IMR-90 (cell line): ENCODE measurements at regions of chr12 and their contacts with region 1.

Region 1: DNA sequence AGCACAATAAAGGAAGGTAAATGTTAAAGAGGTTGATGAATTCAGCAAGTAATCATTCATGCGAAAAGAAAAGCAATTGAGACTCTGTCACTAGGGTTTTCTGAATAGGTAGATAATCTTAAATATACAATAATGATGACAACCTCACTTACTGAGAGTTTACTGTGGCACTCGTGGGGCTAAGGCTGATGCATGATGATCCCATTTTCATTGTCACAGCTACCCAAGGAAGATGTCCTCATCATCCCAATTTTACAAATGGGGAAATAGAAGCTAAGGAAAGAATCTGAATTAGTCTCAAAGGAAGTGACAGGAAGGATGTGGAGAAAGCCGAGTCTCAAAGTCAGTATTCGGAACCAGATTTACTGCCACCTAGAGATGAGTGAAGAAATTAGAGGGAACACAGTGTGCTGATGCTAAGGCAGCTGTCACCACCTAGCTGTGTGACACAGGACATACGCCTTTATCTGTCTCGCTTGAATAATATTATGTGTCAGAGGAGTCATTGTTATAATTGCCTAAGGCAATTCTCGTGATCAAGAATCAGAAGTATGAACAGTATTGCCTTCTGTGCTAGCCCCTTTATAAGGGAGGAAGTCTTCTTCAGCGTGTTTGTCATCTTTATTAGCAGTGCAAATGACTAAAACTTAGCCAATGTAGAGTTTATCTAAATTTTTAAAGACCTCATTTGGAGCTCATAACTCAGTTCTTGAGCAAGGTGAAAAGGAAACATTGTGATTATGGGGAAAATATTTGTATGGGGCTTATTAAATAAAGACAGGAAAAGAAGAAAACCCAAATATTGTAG is 63.2 kb downstream of the ERGIC2 start:
- DNase-seq: peak; percentile 30
- ATAC-seq: peak; percentile 32; the same call in 1 of the 2 replicates
- H3K4me3 ChIP-seq: no peak overlapping the region
- H3K27ac ChIP-seq: no peak overlapping the region
- H3K4me1 ChIP-seq: peaks cover 5% of the 10 kb centered on the region; the same call in 1 of the 2 replicates
- H3K27me3 ChIP-seq: no peaks in the 10 kb centered on the region
- CTCF ChIP-seq: peak; percentile 42
- POLR2A ChIP-seq: no peak
- RAD21 ChIP-seq: peak; percentile 34; the same call in 1 of the 2 replicates

Region 2: GRCh38 chr12:29012673-29013072 is 305.1 kb before region 1 on chr12:
- CTCF ChIA-PET with region 1: no interaction called
- POLR2A ChIA-PET with region 1: no interaction called
- dilution Hi-C with region 1: no loop called
- in situ Hi-C with region 1: no loop called
- intact Hi-C with region 1: no loop called
- DNase-seq: no peak
- ATAC-seq: no peak
- H3K4me3 ChIP-seq: no peak overlapping the region
- H3K27ac ChIP-seq: no peak overlapping the region
- H3K4me1 ChIP-seq: no peaks in the 10 kb centered on the region
- H3K27me3 ChIP-seq: no peaks in the 10 kb centered on the region
- CTCF ChIP-seq: no peak
- POLR2A ChIP-seq: no peak
- RAD21 ChIP-seq: no peak

Region 3: DNA sequence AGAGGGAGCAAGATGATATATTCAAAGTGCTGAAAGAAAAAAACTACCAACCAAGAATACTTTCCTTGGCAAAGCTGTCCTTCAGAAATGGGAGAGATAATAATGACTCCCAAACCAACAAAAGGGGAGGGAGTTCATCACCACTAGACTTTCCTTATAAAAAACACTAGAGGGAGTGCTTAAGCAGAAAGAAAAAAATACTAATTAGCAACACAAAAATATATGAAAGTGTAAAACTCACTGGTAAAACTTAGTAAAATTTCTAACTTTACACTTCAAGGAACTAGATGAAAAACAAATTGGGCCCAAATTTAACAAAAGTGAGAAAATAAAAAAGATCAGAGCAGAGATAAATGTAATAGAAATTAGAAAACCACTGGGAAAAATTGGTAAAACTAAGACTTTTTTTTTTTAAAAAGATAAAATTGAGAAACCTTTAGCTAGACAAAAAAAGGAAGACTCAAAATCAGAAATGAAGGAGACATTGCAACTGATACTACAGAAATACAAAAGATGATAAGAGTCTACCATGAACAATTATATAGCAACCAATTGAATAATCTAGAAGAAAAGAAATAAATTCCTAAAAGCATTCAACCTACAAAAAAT is 229.0 kb before region 1 on chr12:
- CTCF ChIA-PET with region 1: interaction called, 3 read pairs
- POLR2A ChIA-PET with region 1: no interaction called
- dilution Hi-C with region 1: no loop called
- in situ Hi-C with region 1: no loop called
- intact Hi-C with region 1: loop called (anchors 5 kb)
- DNase-seq: peak; percentile 16
- ATAC-seq: no peak
- H3K4me3 ChIP-seq: no peak overlapping the region
- H3K27ac ChIP-seq: no peak overlapping the region
- H3K4me1 ChIP-seq: no peaks in the 10 kb centered on the region
- H3K27me3 ChIP-seq: peaks cover 3% of the 10 kb centered on the region
- CTCF ChIP-seq: peak; percentile 40
- POLR2A ChIP-seq: no peak
- RAD21 ChIP-seq: no peak

Region 4: GRCh38 chr12:29232086-29232485 is 85.7 kb before region 1 on chr12:
- CTCF ChIA-PET with region 1: interaction called, 10 read pairs
- POLR2A ChIA-PET with region 1: no interaction called
- dilution Hi-C with region 1: no loop called
- in situ Hi-C with region 1: no loop called
- intact Hi-C with region 1: no loop called
- DNase-seq: no peak
- ATAC-seq: no peak
- H3K4me3 ChIP-seq: no peak overlapping the region
- H3K27ac ChIP-seq: no peak overlapping the region
- H3K4me1 ChIP-seq: no peaks in the 10 kb centered on the region; the same call in 1 of the 2 replicates
- H3K27me3 ChIP-seq: no peaks in the 10 kb centered on the region
- CTCF ChIP-seq: no peak
- POLR2A ChIP-seq: no peak
- RAD21 ChIP-seq: no peak